Sciatic nerve (tissue), 2 donors: ENCODE measurements at regions of chr20 and their contacts with region 1.

Region 1: DNA sequence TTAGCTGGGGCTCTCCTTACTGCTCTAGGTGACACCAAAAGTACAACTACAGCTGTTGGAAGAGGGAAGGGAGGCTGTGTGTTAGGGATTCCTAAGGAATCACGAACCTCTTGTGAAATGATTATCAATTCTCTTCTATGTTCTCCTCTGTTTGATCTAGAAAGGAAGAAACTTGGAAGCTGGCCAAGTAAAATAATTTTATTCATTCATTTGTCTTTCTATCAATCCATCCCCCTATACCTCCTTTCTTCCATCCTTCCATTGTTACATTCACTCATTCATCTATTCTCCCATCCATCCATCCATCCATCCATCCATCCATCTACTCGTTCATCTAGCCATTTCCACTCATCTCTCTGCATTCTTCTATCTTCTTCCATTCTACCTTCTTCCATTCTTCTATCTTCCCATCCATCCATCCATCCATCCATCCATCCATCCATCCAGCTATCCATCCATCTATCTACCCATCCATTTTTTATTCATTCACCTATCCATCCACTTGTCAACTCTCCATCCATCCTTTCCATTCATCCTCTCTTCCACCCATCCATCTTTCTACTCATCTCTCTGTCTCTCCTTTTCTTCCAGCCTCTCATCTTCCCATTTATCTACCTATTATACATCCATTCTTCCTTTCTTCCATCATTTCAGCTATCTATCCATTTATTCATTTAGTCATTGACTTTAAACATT is 52.8 kb upstream of the ZNFX1 start:
- DNase-seq: no peak
- ATAC-seq: no peak

Region 2: GRCh38 chr20:48308882-48309281 is 1021.8 kb before region 1 on chr20:
- intact Hi-C with region 1: no loop called
- DNase-seq: no peak
- ATAC-seq: no peak

Region 3: DNA sequence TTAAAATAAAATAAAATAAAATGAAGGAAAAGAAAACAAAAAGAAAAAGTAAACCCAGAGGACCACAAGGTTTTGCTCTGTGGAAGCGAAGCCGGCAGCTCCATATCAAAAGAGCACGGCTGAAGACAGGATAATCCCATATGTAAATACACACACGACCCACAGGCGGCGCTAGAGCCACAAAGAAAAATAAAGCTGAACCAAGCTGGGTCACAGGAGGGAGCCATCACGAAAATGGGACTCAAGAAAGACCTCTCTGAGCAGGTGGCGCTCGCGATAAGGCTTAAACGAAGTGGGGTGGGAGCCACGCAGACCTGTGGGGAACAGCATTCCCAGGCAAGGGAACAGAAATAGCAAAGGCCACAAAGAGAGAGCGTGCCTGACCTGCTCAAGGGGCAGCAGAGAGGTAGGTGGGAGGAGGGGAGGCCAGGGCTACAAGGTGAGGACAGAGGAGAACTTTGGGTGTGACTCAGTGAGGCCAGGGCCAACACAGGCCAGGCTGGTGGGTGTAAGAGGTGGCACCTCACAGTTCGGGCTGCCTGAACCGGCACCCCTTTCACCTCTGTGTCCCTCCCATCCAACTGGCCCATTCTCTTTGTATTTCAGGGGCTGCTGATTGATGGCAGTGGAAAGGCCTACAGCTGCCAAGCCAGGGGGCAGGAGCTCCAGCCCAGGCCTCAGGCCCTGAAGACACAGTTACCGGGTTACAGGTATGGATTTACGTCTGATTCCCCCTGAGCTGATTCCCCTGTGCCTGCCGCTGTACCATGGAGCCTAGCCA is 211.2 kb after region 1 on chr20:
- intact Hi-C with region 1: loop called (anchors 5 kb)
- DNase-seq: peak; percentile 75
- ATAC-seq: peak; percentile 74

Region 4: DNA sequence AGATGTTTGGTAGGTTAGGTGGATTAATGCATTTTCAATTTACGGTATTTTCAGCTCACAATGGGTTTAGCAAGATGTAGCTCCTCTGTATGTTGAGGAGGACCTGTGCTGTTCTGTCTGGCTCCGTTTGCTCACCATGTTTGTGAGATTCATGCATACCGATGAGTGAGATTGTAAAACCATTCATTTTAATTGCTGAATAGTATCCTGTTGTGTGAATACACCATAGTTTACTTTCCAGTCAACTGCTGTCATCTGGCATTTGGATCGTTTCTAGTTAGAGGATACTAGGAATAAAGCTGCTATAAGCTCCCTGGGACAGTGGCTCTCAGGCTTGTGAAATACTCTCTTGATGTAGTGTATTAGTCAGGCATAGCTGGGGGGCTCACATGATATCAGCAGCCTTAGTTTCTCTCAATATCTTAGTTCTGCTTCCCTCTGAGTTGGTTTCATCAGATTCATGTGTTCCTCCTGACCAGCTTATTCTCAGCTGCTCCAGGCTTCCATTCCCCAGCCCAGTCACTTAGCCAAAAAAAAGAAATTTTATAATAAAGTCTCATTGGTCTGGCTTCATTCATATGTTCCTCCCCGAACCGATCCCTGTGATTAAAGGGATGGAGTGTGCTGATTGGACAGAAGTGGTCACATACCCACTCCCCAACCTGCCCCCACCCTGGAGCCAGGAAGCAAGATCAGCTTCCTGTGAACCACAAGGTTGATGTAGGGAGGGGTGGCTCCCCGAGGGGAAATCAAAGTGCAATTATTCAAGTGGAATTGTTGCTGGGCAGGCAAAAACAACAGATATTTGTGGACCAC is 393.9 kb after region 1 on chr20:
- intact Hi-C with region 1: loop called (anchors 5 kb)
- DNase-seq: peak; percentile 81
- ATAC-seq: peak; percentile 99